Activated naive CD4-positive, alpha-beta T cell treated with anti-CD3 and anti-CD28 coated beads for 36 hours (primary cell): ENCODE measurements at regions of chr10 and their contacts with region 1.

Region 1: DNA sequence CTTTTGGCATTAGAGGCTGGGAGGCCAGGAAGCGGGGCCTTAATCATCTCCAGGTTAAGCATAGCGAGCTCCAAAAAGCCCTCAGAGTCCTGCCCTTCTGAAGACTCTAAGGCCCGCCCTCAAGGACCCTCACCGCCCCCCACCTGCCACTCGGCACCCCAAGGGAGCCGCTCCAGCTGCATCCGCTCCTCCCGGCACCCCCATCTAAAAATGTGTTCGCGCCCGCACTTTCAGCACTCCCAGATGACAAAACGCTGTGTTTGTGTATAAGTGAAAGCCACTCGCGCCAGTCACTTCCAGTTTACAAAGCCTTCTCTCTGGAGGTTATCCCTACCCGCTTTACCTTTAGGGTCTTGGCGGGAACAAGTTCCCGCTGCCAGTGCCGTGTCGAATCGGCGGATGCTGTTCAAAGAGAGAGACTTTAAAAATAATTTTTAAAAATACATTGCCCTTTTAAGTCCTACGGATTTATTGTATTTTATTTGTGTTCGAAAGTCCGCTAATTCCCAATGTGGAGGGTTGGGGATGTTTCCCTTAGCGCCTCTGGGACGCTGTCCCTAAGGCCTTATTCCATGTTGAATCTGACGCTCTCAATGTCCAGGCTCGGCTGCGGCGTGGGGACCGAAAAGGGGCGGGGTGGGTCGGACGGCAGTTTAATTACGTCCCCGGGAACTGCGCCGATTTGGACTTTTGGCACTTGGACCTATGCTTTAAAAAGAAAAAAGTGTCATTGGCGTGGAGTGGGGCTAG is at the starts of genes DCLRE1A and NHLRC2:
- DNase-seq: peak; percentile 67
- H3K4me3 Mint-ChIP-seq: peak within 1 kb of the TSS; percentile 95
- H3K27ac Mint-ChIP-seq: peak within 1 kb of the TSS; percentile 98
- H3K4me1 Mint-ChIP-seq: peaks cover 35% of the 10 kb centered on the region
- H3K27me3 Mint-ChIP-seq: no peaks in the 10 kb centered on the region
- total RNA-seq, gene DCLRE1A: 8.1 to 8.7 TPM
- total RNA-seq, gene NHLRC2: 12.6 to 13.9 TPM

Region 2: GRCh38 chr10:113960617-113961181 is 106.5 kb after region 1 on chr10:
- CTCF ChIA-PET with region 1: no interaction called
- intact Hi-C with region 1: loop called (anchors 1 kb)
- DNase-seq: peak; percentile 39
- H3K4me3 Mint-ChIP-seq: no peak overlapping the region
- H3K27ac Mint-ChIP-seq: no peak overlapping the region
- H3K4me1 Mint-ChIP-seq: peaks cover 37% of the 10 kb centered on the region
- H3K27me3 Mint-ChIP-seq: peaks cover 7% of the 10 kb centered on the region

Region 3: DNA sequence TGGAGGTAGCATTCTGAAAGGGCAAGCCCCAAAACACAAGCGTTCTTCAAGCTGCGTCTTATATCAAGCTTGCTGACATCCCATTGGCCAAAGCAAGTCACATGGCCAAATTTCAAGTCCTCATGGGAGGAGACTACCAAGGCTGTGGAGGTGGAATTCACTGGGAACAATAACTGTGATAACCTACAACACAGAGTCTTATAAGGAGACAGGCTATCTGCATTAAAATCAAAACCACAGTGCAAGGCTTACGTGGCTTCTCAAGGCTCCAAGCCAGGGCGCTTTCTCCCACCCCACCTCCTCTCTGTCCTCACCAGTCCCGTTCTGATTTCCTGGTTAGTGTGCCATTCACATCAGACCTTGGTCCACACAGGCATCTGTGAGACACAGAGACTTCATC is 228.9 kb after region 1 on chr10:
- CTCF ChIA-PET with region 1: no interaction called
- intact Hi-C with region 1: loop called (anchors 5 kb)
- DNase-seq: peak; percentile 16
- H3K4me3 Mint-ChIP-seq: no peak overlapping the region
- H3K27ac Mint-ChIP-seq: no peak overlapping the region
- H3K4me1 Mint-ChIP-seq: no peaks in the 10 kb centered on the region
- H3K27me3 Mint-ChIP-seq: peaks cover 5% of the 10 kb centered on the region

Region 4: GRCh38 chr10:114173921-114174694 is 319.9 kb after region 1 on chr10 and contains the start of gene CCDC186:
- CTCF ChIA-PET with region 1: no interaction called
- intact Hi-C with region 1: loop called (anchors 2 kb)
- DNase-seq: peak; percentile 99
- H3K4me3 Mint-ChIP-seq: peak within 1 kb of the TSS; percentile 98
- H3K27ac Mint-ChIP-seq: peak within 1 kb of the TSS; percentile 93
- H3K4me1 Mint-ChIP-seq: peaks cover 27% of the 10 kb centered on the region
- H3K27me3 Mint-ChIP-seq: no peaks in the 10 kb centered on the region
- total RNA-seq, gene CCDC186: 10.3 to 13.7 TPM

Region 5: DNA sequence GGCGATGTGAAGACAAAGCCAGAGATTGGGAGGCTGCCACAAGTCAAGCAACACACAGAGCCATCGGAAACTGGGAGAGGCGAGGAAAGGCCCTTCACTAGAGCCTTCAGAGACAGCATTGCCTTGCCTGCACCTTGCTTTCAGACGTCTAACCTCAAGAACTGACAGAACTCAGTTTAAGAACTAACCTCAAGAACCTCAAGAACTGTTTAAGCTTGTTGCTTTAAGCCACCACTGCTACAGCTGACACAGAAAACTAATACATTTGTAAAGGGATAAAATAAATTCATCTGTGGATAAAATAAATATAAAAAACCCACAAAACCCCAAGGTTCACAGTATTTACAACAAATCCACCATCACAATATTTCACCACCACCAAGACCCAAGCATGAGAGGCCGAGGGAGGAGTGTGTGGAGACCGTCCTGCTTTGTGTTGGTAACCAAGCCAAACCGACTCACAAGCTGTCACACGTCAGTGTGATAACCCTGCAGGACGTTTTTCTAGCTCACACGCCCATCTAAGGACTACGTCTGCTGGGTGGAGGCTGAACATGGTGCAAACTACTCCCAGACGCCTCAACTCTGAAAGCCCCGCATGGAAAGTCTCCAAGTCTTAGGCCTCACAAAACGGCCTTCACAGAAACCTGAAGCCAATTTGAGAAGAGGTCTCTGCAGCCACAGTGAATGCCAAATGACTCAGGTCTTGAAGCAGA is 687.1 kb after region 1 on chr10:
- CTCF ChIA-PET with region 1: no interaction called
- intact Hi-C with region 1: loop called (anchors 5 kb)
- DNase-seq: peak; percentile 87
- H3K4me3 Mint-ChIP-seq: peak overlapping the region; percentile 69
- H3K27ac Mint-ChIP-seq: peak overlapping the region; percentile 95
- H3K4me1 Mint-ChIP-seq: peaks cover 90% of the 10 kb centered on the region
- H3K27me3 Mint-ChIP-seq: no peaks in the 10 kb centered on the region